ENCODE measurements at regions of chr19 and their contacts with region 1.

Region 1: DNA sequence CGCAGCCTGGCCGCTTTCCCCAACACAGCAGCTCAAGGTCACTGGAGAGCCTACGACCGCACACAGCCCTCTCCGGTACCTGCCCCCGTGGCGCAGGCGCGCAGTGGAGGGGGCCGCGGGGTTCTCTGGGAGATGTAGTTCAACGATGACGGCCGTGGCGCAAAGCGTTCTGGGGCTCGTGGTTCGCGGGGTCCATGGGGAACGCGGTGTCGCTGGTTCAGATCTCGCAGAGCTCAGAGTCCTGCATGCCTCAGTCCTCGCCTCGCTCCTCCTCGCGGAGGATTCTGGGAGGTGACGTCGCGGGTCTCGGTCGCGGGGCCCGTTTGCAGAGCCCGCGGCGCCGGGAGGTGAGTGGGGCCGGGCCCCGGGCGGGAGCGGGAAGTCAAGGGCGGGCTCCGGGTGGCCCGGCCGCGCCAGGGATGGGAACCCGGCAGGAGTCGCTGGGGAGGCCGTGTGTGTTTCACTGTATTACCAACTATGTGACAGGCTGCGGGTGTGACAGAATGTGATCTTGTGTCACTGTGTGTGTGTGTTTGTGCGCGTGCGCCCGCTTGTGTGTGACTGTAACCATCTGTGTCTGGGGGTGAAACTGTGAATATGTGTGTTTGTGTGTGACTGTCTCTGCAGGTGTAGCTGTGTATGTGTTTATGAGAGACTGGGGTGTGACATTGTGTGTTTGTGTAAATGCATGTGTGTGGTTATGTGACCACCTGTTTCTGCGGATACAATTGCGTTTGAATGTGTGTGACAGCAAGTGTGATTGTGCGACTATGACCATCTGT is at the start of gene ZNF527:
- DNase-seq: peak; percentile 95 to 97
- ATAC-seq: peak; percentile 98 to 99
- H3K4me3 ChIP-seq: peak within 1 kb of the TSS; percentile 73 to 90 (median 88)
- H3K27ac ChIP-seq: peak within 1 kb of the TSS; percentile 84 to 91 (median 88)
- H3K4me1 ChIP-seq: peaks cover 7 to 8% of the 10 kb centered on the region in 2 donors
- H3K27me3 ChIP-seq: no peaks in the 10 kb centered on the region
- CTCF ChIP-seq: no peak
- POLR2A ChIP-seq: peak; percentile 76 to 88
- total RNA-seq, gene ZNF527: 2.0 to 6.0 (median 2.8) TPM

Region 2: GRCh38 chr19:36528194-36528920 is 842.7 kb before region 1 on chr19 and contains the start of gene ZNF260:
- in situ Hi-C with region 1: no loop called
- intact Hi-C with region 1: loop called (anchors 2 kb)
- DNase-seq: peak; percentile 96
- ATAC-seq: peak; percentile 99
- H3K4me3 ChIP-seq: peak within 1 kb of the TSS; percentile 71 to 83 (median 80)
- H3K27ac ChIP-seq: peak within 1 kb of the TSS; percentile 83 to 94 (median 90)
- H3K4me1 ChIP-seq: peaks cover 16 to 17% of the 10 kb centered on the region in 2 donors
- H3K27me3 ChIP-seq: no peaks in the 10 kb centered on the region
- CTCF ChIP-seq: no peak
- POLR2A ChIP-seq: peak; percentile 43 to 56
- total RNA-seq, gene ZNF260: 1.3 to 16.3 (median 3.2) TPM

Region 3: GRCh38 chr19:37313335-37313627 is 57.8 kb before region 1 on chr19:
- in situ Hi-C with region 1: no loop called
- intact Hi-C with region 1: loop called (anchors 1 kb)
- DNase-seq: no peak
- ATAC-seq: no peak
- H3K4me3 ChIP-seq: peak overlapping the region in 1 of 4 donors; percentile 47
- H3K27ac ChIP-seq: peak overlapping the region in 1 of 4 donors; percentile 18
- H3K4me1 ChIP-seq: peaks cover 0 to 5% of the 10 kb centered on the region in 2 donors
- H3K27me3 ChIP-seq: peaks cover 0 to 10% (median 0%) of the 10 kb centered on the region in 3 donors
- CTCF ChIP-seq: no peak
- POLR2A ChIP-seq: no peak

Region 4: GRCh38 chr19:37594304-37594981 is 223.4 kb after region 1 on chr19 and contains the starts of genes ZNF540 and ZNF571:
- in situ Hi-C with region 1: no loop called
- intact Hi-C with region 1: loop called (anchors 1 kb)
- DNase-seq: peak; percentile 85 to 89
- ATAC-seq: peak; percentile 98 to 99
- H3K4me3 ChIP-seq: peak within 1 kb of the TSS; percentile 78 to 95 (median 86)
- H3K27ac ChIP-seq: peak within 1 kb of the TSS; percentile 87 to 95 (median 90)
- H3K4me1 ChIP-seq: peaks cover 17 to 19% of the 10 kb centered on the region in 2 donors
- H3K27me3 ChIP-seq: no peaks in the 10 kb centered on the region
- CTCF ChIP-seq: no peak
- POLR2A ChIP-seq: peak; percentile 61 to 63
- total RNA-seq, gene ZNF540: 0.46 to 1.5 (median 1.3) TPM
- total RNA-seq, gene ZNF571: 1.5 to 2.5 (median 1.8) TPM

Region 5: GRCh38 chr19:37779127-37780005 is 408.3 kb after region 1 on chr19 and contains the start of gene ZNF573:
- in situ Hi-C with region 1: no loop called
- intact Hi-C with region 1: loop called (anchors 2 kb)
- DNase-seq: peak; percentile 73 to 78
- ATAC-seq: peak; percentile 99
- H3K4me3 ChIP-seq: peak within 1 kb of the TSS; percentile 72 to 99 (median 84)
- H3K27ac ChIP-seq: peak within 1 kb of the TSS; percentile 83 to 89 (median 88)
- H3K4me1 ChIP-seq: peaks cover 0 to 13% of the 10 kb centered on the region in 2 donors
- H3K27me3 ChIP-seq: no peaks in the 10 kb centered on the region
- CTCF ChIP-seq: peak in 1 of 5 experiments; percentile 18
- POLR2A ChIP-seq: peak; percentile 43 to 65
- total RNA-seq, gene ZNF573: 2.6 to 12.8 (median 5.6) TPM

Measured in gastrocnemius medialis (tissue), 4 donors.